Cardiac septum (tissue), 1 donor: ENCODE measurements at regions of chr16 and their contacts with region 1.

Region 1: GRCh38 chr16:57899771-57900661 is 70.9 kb downstream of the CNGB1 start:
- DNase-seq: peak; percentile 85

Region 2: DNA sequence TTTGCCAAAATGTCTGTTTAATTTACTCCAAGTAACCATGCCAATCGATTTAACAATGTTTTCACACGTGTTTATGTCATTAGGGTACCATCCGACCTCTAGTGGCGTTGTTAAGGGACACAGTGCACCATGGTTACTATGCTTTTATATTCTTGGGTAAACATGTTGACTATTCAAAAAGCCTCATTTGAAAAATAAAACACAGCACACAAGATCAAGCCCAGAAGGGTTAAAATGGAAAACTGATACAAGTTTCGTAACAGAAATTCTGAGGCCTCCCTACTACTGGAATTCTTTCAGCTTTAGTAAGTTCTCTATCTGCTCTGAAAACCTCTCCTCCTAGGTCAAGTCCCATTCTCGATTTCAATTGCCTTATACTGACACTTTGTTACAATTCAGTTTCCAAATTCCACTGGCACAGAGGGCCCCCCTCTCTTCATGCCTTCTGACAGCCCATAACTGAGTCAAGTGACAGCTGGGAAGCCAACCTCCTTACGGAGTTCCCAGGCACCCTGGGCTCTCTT is 227.1 kb after region 1 on chr16:
- intact Hi-C with region 1: loop called (anchors 5 kb)
- DNase-seq: no peak